Activated CD8-positive, alpha-beta T cell treated with anti-CD3 and anti-CD28 coated beads for 36 hours (primary cell): ENCODE measurements at regions of chr9 and their contacts with region 1.

Region 1: DNA sequence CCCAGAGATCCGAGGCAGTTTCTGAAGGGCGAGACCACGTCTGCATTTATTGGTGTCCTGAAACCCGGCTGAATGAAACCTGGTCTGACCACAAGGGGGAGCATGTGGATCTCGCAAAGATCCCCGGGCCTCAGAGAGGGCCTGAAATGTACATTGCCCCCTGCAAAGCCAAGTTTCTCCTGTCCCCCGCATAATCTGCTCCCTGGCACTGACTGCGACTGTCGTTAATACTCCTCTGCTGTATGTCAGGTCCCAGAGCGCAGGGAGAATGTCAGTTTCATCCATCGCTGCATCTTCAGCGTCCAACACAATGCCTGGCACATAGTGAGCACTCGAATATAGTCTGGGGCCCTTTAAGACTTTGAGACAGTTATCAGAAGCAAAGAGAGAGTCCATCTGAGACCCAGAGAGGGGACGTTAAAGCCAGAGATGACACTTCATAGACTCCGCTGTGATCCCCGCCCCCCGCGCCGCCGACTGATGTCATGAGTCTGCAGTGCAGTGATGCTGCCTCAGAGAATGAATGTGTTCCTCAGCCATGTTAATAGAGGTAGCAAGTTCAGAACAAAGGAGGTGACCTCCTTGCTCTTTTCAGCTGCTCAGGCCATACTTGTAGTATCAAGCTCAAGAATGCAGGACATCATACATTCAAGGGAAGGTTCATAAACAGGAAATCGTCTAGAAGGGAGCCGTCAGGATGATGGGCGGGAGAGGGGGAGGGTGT is 74.5 kb upstream of the BARHL1 start:
- DNase-seq: peak; percentile 84
- ATAC-seq: peak; percentile 71
- H3K4me3 Mint-ChIP-seq: no peak overlapping the region
- H3K27ac Mint-ChIP-seq: no peak overlapping the region
- H3K4me1 Mint-ChIP-seq: peaks cover 3% of the 10 kb centered on the region
- H3K27me3 Mint-ChIP-seq: peaks cover 17% of the 10 kb centered on the region
- CTCF ChIP-seq: peak; percentile 87

Region 2: GRCh38 chr9:132486706-132487350 is 21.1 kb before region 1 on chr9:
- CTCF ChIA-PET with region 1: interaction called, 42 read pairs
- POLR2A ChIA-PET with region 1: interaction called, 3 read pairs
- intact Hi-C with region 1: no loop called
- DNase-seq: peak; percentile 88
- ATAC-seq: peak; percentile 93
- H3K4me3 Mint-ChIP-seq: peak overlapping the region; percentile 42
- H3K27ac Mint-ChIP-seq: peak overlapping the region; percentile 87
- H3K4me1 Mint-ChIP-seq: peaks cover 27% of the 10 kb centered on the region
- H3K27me3 Mint-ChIP-seq: peaks cover 48% of the 10 kb centered on the region
- CTCF ChIP-seq: no peak

Region 3: GRCh38 chr9:132575005-132575609 is 67.2 kb after region 1 on chr9:
- CTCF ChIA-PET with region 1: interaction called, 25 read pairs
- POLR2A ChIA-PET with region 1: no interaction called
- intact Hi-C with region 1: loop called (anchors 5 kb)
- DNase-seq: peak; percentile 79
- ATAC-seq: peak; percentile 91
- H3K4me3 Mint-ChIP-seq: no peak overlapping the region
- H3K27ac Mint-ChIP-seq: no peak overlapping the region
- H3K4me1 Mint-ChIP-seq: no peaks in the 10 kb centered on the region
- H3K27me3 Mint-ChIP-seq: peaks cover 49% of the 10 kb centered on the region
- CTCF ChIP-seq: peak; percentile 94

Region 4: DNA sequence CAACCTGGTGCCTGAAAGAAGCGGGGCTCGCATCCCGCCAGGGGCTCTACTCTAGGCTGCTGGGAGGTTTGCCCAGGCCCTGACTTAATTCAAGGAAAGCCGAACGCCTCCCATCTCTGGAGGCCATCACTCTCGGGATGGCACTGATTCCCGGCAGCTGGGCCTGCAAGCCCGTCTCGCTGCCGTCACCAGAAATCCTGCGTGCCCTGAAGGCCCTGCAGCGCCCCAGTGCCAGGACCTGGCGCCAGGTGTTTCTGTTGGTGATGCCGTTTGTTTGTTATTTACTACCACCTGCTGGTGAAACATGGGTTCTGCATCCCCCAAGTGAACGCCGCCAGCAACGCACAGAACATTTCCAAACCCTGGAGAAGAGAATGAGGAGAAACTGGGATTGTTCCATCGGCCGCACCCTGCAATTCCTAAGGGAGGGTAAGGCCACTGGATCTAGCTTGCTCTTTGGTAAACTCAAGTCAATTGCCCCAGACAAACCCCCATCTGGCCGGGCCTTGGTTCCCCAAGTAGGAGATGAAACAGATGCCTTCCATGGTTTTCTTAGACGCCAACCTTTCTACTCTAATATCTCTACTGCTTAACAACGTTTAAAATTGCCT is 292.2 kb after region 1 on chr9:
- CTCF ChIA-PET with region 1: interaction called, 3 read pairs
- POLR2A ChIA-PET with region 1: no interaction called
- intact Hi-C with region 1: loop called (anchors 10 kb)
- DNase-seq: peak; percentile 73
- ATAC-seq: peak; percentile 94
- H3K4me3 Mint-ChIP-seq: no peak overlapping the region
- H3K27ac Mint-ChIP-seq: no peak overlapping the region
- H3K4me1 Mint-ChIP-seq: peaks cover 2% of the 10 kb centered on the region
- H3K27me3 Mint-ChIP-seq: peaks cover 16% of the 10 kb centered on the region
- CTCF ChIP-seq: peak; percentile 96